ENCODE measurements at regions of chr11 and their contacts with region 1.

Region 1: GRCh38 chr11:103601225-103601846 is 435.1 kb upstream of the DDI1 start:
- DNase-seq: peak; percentile 73
- H3K4me3 Mint-ChIP-seq: no peak overlapping the region
- H3K27ac Mint-ChIP-seq: no peak overlapping the region
- H3K4me1 Mint-ChIP-seq: no peaks in the 10 kb centered on the region
- H3K27me3 Mint-ChIP-seq: peaks cover 1% of the 10 kb centered on the region

Region 2: GRCh38 chr11:102306048-102306585 is 1295.2 kb before region 1 on chr11:
- intact Hi-C with region 1: no loop called
- DNase-seq: no peak
- H3K4me3 Mint-ChIP-seq: peak overlapping the region; percentile 58
- H3K27ac Mint-ChIP-seq: peak overlapping the region; percentile 81
- H3K4me1 Mint-ChIP-seq: peaks cover 47% of the 10 kb centered on the region
- H3K27me3 Mint-ChIP-seq: no peaks in the 10 kb centered on the region

Region 3: GRCh38 chr11:103035791-103036434 is 565.4 kb before region 1 on chr11:
- intact Hi-C with region 1: loop called (anchors 1 kb)
- DNase-seq: peak; percentile 87
- H3K4me3 Mint-ChIP-seq: peak overlapping the region; percentile 18
- H3K27ac Mint-ChIP-seq: peak overlapping the region; percentile 79
- H3K4me1 Mint-ChIP-seq: peaks cover 18% of the 10 kb centered on the region
- H3K27me3 Mint-ChIP-seq: peaks cover 2% of the 10 kb centered on the region

Region 4: DNA sequence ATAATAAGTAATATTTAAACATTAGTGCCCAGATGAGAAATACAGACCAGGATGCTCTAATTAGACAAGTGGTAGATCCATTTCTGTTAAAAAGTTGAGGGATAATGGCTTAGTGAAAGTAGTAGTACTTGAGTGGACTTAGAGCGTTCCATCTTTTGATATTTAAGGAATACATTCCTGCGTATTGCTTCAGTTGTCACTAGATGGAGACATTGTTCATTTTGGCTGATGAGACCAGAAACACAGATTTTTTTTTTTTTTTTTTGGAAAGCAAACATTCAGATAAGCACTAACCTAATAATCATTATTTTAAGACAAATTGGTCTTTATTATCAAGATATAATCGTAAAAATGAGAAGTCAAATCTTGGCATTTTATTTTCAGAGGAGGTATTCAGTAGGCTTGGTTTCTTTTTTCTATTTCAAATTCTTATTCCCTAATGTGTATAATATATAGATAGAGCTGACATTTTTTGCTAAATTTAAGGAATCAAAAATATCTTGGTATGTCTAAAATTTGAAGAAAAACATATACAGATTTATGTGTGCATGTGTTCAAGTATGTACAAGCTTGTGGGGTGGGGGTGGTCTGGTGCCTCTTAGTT is 399.2 kb before region 1 on chr11:
- intact Hi-C with region 1: loop called (anchors 10 kb)
- DNase-seq: no peak
- H3K4me3 Mint-ChIP-seq: no peak overlapping the region
- H3K27ac Mint-ChIP-seq: no peak overlapping the region
- H3K4me1 Mint-ChIP-seq: no peaks in the 10 kb centered on the region
- H3K27me3 Mint-ChIP-seq: no peaks in the 10 kb centered on the region

Region 5: DNA sequence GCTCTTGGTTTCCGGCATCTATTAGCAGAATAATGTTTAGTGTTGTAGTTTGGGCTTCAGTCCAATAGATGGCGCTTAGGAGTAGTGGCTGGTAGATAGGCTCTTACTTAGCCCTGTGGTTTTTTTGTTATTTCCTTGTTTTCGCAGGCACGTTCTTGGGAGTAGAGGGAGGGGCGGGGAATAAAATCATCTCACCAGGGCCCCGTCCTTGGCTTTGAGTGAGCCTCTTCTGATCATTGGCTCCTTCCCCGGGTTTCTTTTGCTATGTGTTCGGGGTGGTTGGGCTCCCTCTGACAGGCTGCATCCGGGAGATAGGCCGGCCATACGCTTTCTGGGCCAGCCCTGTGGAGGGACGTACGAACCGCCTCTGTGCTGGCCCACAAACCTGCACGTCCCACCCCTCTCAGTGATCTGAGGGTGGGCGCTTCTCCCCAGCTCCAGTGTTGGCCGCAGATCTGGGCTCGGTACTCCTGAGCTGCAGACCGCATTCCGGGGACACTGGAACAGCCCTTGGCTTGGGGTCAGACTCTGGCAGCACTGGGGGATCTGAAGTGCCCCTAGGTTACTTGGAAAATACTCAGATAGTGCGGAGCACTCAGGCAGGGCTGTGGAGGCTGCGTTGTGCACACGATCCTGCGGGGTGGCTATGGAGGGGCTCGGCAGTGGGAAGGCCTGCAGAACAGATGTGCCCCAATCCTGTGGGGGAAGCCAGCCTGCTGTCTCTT is 275.1 kb before region 1 on chr11:
- intact Hi-C with region 1: loop called (anchors 1 kb)
- DNase-seq: peak; percentile 81
- H3K4me3 Mint-ChIP-seq: no peak overlapping the region
- H3K27ac Mint-ChIP-seq: no peak overlapping the region
- H3K4me1 Mint-ChIP-seq: peaks cover 4% of the 10 kb centered on the region
- H3K27me3 Mint-ChIP-seq: peaks cover 6% of the 10 kb centered on the region